ENCODE measurements at regions of chr19 and their contacts with region 1.

Region 1: GRCh38 chr19:49983645-49984229 is 22.8 kb upstream of the SIGLEC11 start:
- DNase-seq: peak; percentile 79
- H3K4me3 ChIP-seq: no peak overlapping the region
- H3K27ac ChIP-seq: no peak overlapping the region
- H3K4me1 ChIP-seq: no peaks in the 10 kb centered on the region
- CTCF ChIP-seq: peak; percentile 97

Region 2: GRCh38 chr19:49929611-49930482 is 53.9 kb before region 1 on chr19:
- CTCF ChIA-PET with region 1: no interaction called
- POLR2A ChIA-PET with region 1: no interaction called
- intact Hi-C with region 1: loop called (anchors 1 kb)
- DNase-seq: peak; percentile 99
- H3K4me3 ChIP-seq: peak overlapping the region; percentile 91
- H3K27ac ChIP-seq: peak overlapping the region; percentile 90
- H3K4me1 ChIP-seq: peaks cover 49% of the 10 kb centered on the region
- CTCF ChIP-seq: no peak

Region 3: DNA sequence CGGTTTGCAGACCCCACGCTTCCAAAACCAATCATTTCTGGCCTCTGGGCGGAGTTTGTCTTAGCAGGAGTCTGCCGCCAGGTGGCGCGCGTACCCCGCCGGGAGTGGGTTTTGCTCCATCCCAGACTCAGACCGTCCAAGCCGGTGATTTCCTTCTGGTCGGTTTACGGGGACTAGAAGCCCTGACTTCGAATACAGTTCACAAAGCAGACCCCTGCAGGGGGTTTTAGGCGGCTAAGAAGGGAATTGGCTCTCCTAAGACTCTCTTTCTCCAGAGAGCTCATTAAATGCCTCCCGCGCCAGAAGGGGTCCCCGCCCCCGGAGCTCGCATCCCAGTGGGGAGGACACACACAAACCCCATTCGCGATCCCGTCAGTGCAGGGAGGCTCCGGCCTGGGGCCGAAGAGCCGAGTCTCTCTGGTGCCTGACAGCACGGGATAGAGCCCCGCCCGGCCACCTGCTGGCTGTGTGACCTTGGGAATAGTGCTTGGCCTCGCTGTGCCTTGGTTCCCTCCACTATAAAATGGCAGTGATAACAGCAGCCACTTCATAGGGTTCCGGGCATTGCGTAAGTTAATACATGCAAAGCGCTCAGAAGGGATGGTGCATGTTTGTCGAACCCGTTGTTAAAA is 45.9 kb before region 1 on chr19:
- CTCF ChIA-PET with region 1: no interaction called
- POLR2A ChIA-PET with region 1: no interaction called
- intact Hi-C with region 1: loop called (anchors 1 kb)
- DNase-seq: peak; percentile 73
- H3K4me3 ChIP-seq: no peak overlapping the region
- H3K27ac ChIP-seq: no peak overlapping the region
- H3K4me1 ChIP-seq: no peaks in the 10 kb centered on the region
- CTCF ChIP-seq: peak; percentile 97